Breast epithelium (tissue), 4 donors: ENCODE measurements at regions of chr15 and their contacts with region 1.

Region 1: GRCh38 chr15:49718234-49718633 is 97.4 kb downstream of the DTWD1 start:
- DNase-seq: no peak
- H3K4me3 ChIP-seq: peak overlapping the region in 1 of 3 donors; percentile 26
- H3K27ac ChIP-seq: peak overlapping the region; percentile 61 to 86
- H3K4me1 ChIP-seq: no peaks in the 10 kb centered on the region
- H3K27me3 ChIP-seq: no peaks in the 10 kb centered on the region
- CTCF ChIP-seq: no peak
- POLR2A ChIP-seq: no peak

Region 2: GRCh38 chr15:48914717-48915116 is 803.5 kb before region 1 on chr15:
- intact Hi-C with region 1: loop called (anchors 5 kb)
- DNase-seq: no peak
- H3K4me3 ChIP-seq: no peak overlapping the region
- H3K27ac ChIP-seq: no peak overlapping the region
- H3K4me1 ChIP-seq: no peaks in the 10 kb centered on the region
- H3K27me3 ChIP-seq: no peaks in the 10 kb centered on the region
- CTCF ChIP-seq: no peak
- POLR2A ChIP-seq: no peak

Region 3: DNA sequence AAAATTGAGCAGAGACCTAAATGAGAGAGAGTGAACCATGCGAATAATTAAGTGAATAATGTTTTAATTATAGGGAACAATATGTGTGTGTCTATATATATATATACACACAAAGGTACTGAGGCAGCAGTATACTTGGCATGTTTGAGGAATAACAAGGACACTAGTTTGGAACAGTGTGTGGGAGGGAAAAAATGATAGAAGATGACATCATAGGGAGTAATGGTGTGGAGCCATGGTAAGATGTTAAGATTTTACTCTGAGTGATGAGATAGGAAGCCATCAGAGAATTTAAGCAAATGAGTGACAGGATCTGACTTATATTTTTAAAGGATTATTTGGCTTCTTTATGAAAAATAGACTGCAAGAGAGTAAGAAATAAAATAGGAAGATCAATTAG is 68.2 kb before region 1 on chr15:
- intact Hi-C with region 1: no loop called
- DNase-seq: no peak
- H3K4me3 ChIP-seq: no peak overlapping the region
- H3K27ac ChIP-seq: no peak overlapping the region
- H3K4me1 ChIP-seq: no peaks in the 10 kb centered on the region
- H3K27me3 ChIP-seq: no peaks in the 10 kb centered on the region
- CTCF ChIP-seq: no peak
- POLR2A ChIP-seq: no peak

Region 4: DNA sequence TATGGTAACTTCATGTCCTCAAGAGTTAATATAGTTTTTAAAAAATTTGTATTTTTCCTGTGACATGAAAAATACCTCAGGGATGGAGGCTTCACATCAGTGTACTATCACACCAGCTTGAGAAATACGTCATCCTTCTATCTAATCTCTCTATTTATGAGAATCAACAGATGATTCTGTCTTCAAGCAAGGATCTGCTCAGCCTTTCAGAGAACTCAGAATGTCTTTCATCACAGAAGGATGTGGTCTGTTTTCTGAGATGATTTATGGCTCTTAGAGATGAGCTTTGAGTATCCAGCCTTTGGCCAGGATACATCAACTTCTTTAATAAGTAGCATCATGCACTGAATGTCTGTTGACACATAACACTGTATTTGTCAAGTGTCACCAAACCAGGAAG is 96.5 kb after region 1 on chr15:
- intact Hi-C with region 1: loop called (anchors 5 kb)
- DNase-seq: no peak
- H3K4me3 ChIP-seq: no peak overlapping the region
- H3K27ac ChIP-seq: no peak overlapping the region
- H3K4me1 ChIP-seq: no peaks in the 10 kb centered on the region
- H3K27me3 ChIP-seq: no peaks in the 10 kb centered on the region
- CTCF ChIP-seq: no peak
- POLR2A ChIP-seq: no peak

Region 5: GRCh38 chr15:51341366-51342226 is 1623.4 kb after region 1 on chr15 and contains the start of gene GLDN:
- intact Hi-C with region 1: no loop called
- DNase-seq: no peak
- H3K4me3 ChIP-seq: peak within 1 kb of the TSS; percentile 37 to 70 (median 47)
- H3K27ac ChIP-seq: peak within 1 kb of the TSS in 1 of 2 donors; percentile 61
- H3K4me1 ChIP-seq: peaks cover 0 to 10% of the 10 kb centered on the region in 2 donors
- H3K27me3 ChIP-seq: peaks cover 0 to 11% of the 10 kb centered on the region in 2 donors
- CTCF ChIP-seq: no peak
- POLR2A ChIP-seq: no peak
- total RNA-seq, gene GLDN: 7.3 to 67.2 (median 10.8) TPM